ENCODE measurements at regions of chr5 and their contacts with region 1.

Region 1: GRCh38 chr5:93831449-93831848 is 90.0 kb upstream of the POU5F2 start:
- DNase-seq: no peak
- H3K4me3 ChIP-seq: no peak overlapping the region
- H3K4me3 Mint-ChIP-seq: no peak overlapping the region
- H3K27ac Mint-ChIP-seq: no peak overlapping the region
- H3K4me1 ChIP-seq: no peaks in the 10 kb centered on the region
- H3K4me1 Mint-ChIP-seq: no peaks in the 10 kb centered on the region
- H3K27me3 ChIP-seq: no peaks in the 10 kb centered on the region
- H3K27me3 Mint-ChIP-seq: no peaks in the 10 kb centered on the region
- CTCF ChIP-seq: no peak

Region 2: DNA sequence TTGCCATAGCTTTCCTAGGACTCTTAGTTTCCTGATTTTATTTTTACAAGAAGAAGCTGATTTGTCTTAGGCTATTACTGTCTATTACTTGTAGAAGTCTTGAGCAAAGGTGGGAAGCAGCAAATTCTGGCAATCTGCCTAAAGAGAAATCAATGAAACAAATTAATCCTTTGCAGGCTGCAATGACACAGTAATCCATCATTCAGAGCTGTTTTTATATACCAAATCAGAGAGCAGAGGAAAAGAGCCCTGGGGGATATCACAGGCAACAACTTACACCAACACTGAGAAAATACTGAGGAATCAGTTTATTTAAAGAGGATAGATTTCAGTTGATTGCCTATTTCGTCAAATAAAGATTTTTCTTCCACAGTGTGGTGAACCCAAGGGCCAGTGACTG is 264.0 kb before region 1 on chr5:
- CTCF ChIA-PET with region 1: no interaction called
- POLR2A ChIA-PET with region 1: no interaction called
- intact Hi-C with region 1: no loop called
- DNase-seq: no peak
- H3K4me3 ChIP-seq: no peak overlapping the region
- H3K4me3 Mint-ChIP-seq: no peak overlapping the region
- H3K27ac Mint-ChIP-seq: no peak overlapping the region
- H3K4me1 ChIP-seq: no peaks in the 10 kb centered on the region
- H3K4me1 Mint-ChIP-seq: no peaks in the 10 kb centered on the region
- H3K27me3 ChIP-seq: no peaks in the 10 kb centered on the region
- H3K27me3 Mint-ChIP-seq: peaks cover 4% of the 10 kb centered on the region
- CTCF ChIP-seq: no peak

Region 3: GRCh38 chr5:93870649-93871048 is 39.2 kb after region 1 on chr5:
- CTCF ChIA-PET with region 1: no interaction called
- POLR2A ChIA-PET with region 1: no interaction called
- intact Hi-C with region 1: loop called (anchors 2 kb)
- DNase-seq: no peak
- H3K4me3 ChIP-seq: no peak overlapping the region
- H3K4me3 Mint-ChIP-seq: no peak overlapping the region
- H3K27ac Mint-ChIP-seq: no peak overlapping the region
- H3K4me1 ChIP-seq: no peaks in the 10 kb centered on the region
- H3K4me1 Mint-ChIP-seq: no peaks in the 10 kb centered on the region
- H3K27me3 ChIP-seq: no peaks in the 10 kb centered on the region
- H3K27me3 Mint-ChIP-seq: no peaks in the 10 kb centered on the region
- CTCF ChIP-seq: no peak